ENCODE measurements at regions of chr10 and their contacts with region 1.

Region 1: DNA sequence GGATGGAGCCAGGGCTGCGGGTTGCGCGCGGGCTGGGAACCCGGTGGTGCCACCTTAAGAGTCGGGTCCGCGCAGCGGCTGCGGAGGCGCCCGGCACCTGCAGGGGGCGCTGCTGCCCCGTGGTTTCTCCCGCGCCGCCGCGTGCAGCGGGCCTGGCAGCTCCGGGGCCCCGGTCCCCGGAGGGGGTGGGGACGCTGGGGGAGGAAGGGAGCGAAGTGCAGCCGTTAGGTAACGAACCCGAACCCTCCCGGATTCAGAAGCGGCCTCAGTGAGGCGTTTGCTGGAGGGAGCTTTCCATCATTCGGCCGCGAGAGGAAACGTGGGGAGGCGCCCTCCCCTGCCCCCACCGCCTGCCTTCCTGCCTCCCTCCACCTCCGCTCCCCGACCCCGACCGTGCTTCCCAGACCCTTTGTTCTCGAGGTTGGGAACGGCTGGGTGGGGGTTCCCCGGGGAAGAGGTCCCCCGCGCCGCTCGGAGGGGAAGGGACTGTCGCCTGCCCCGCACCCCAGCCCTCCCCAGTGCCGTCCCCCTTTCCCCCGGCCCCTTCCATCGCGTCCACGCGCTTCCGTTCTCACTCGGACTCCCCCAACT is 29.6 kb downstream of the SKIDA1 start:
- DNase-seq: peak; percentile 81 to 98 (median 86)

Region 2: GRCh38 chr10:21278491-21279239 is 217.2 kb before region 1 on chr10:
- intact Hi-C with region 1: loop called (anchors 5 kb)
- DNase-seq: peak; percentile 58 to 96 (median 84)

Region 3: GRCh38 chr10:21533467-21534279 is 37.8 kb after region 1 on chr10 and contains the start of gene MLLT10:
- intact Hi-C with region 1: loop called (anchors 5 kb)
- DNase-seq: peak; percentile 84 to 99 (median 92)

Region 4: DNA sequence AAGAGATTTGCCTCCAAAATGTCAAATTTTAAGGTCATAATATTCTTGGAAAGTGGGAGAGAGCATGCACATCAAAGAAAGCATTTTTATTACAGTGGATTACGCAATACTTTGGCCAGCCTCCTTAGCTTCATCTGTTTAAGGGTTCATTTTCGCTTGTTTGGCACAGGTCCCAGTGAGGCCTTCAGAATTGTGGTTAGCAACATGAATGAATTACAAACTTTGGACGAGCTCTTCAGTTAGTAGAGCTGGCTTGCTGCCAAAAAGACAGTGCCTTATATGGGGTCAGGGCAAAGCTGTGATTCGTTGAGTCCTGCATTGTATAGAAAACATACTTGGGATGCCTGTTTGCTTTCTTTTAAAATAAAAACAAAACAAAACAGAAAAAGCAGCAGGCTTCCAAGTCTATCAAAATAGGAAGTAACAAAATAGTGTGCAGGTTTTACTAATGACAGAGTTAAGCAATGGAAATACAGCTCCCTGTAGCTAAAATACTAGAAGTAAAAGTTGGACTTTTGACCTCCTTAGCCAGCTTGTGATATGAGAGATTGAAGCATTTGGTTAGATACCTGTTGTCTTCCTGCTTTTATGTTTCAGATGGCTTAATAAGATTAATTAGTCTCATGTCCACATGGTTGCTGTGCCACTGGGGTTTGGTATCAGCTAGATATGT is 229.0 kb after region 1 on chr10:
- intact Hi-C with region 1: loop called (anchors 2 kb)
- DNase-seq: peak in 7 of 10 donors; percentile 60 to 89 (median 65)

Region 5: GRCh38 chr10:21732067-21732772 is 236.4 kb after region 1 on chr10:
- intact Hi-C with region 1: loop called (anchors 1 kb)
- DNase-seq: peak in 7 of 10 donors; percentile 40 to 94 (median 64)

Region 6: GRCh38 chr10:21953585-21954057 is 457.8 kb after region 1 on chr10:
- intact Hi-C with region 1: loop called (anchors 5 kb)
- DNase-seq: no peak

Region 7: GRCh38 chr10:23067939-23068775 is 1572.3 kb after region 1 on chr10:
- intact Hi-C with region 1: loop called (anchors 10 kb)
- DNase-seq: peak; percentile 58 to 96 (median 74)